ENCODE measurements at regions of chr10 and their contacts with region 1.

Region 1: GRCh38 chr10:7901256-7901655 is 83.0 kb downstream of the TAF3 start:
- DNase-seq: no peak
- ATAC-seq: no peak

Region 2: GRCh38 chr10:7857262-7857661 is 44.0 kb before region 1 on chr10:
- intact Hi-C with region 1: loop called (anchors 2 kb)
- DNase-seq: no peak
- ATAC-seq: no peak

Measured in left ventricle myocardium superior (tissue), 1 donor.